Ovary (tissue), 10 donors: ENCODE measurements at regions of chr2 and their contacts with region 1.

Region 1: DNA sequence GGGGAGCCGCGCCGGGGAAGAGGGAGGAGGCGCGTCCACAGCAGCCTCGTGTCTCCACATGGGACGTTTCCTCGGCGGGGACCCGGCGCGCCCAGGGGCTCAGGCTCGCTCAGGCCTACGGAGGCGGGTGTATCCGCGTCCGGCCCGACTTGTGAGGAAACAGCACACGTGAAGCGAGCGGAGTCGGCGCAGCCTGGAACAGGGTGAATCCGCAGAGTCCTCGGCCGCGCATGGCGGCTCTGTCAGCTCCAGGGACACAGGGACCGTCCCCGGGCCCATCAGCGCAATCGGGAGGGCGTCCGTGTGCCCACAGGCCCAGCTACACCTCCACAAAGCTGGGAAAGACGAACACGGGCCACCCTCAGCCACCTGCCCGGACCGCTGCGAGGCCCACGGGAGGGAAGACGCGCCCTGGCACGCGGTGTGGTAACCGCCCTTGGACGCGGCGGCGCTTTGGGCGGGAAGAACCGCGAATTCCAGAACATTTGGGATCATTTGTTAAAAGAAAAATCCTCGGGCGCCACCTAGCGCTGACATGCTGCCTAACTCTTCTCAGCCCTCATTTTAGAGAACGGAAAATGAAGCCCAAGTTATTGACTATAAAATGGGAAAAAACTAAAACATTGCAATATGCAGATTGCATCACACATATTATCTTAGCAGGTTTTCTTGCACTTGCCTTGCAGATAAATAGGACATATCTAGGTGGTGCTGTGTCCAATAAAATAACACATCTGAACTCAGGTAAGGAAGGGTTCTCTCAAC is 40.4 kb downstream of the TMEM18 start:
- DNase-seq: peak; percentile 52 to 86 (median 66)
- H3K4me3 ChIP-seq: no peak overlapping the region
- H3K27ac ChIP-seq: no peak overlapping the region
- H3K4me1 ChIP-seq: peaks cover 2% of the 10 kb centered on the region
- H3K27me3 ChIP-seq: no peaks in the 10 kb centered on the region
- CTCF ChIP-seq: peak in 2 of 3 donors; percentile 32 to 67
- EP300 ChIP-seq: no peak
- POLR2A ChIP-seq: peak; percentile 14

Region 2: DNA sequence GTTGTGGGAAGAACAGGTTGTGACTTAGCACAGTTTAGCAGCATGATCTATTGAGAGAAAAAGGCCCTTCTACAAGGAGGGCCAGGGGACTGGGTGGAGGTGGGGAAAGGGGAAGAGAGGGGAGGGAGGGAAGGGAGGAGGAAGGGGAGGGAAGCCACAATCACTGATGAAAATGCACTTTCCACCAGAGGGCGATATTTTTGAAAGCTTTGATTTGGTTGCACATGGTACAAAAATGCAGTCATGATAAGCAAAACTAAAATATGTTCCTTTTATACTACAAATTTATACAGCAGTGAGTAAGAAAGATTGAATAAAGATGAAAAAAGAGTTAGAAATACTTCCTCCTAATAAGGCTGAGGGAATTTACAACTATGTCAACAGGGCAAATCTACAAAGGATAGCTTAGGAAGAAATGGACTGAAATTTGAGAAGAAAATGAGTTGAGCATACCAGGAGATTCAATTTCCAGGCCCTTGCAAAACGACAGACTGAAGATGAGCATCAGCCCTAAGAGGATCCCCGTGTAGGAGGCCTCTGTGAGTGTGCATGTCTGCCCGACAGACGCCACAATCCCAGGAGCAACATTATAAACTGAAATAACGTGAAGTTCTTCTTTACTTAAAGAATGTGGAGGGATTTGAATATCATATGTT is 390.2 kb before region 1 on chr2:
- intact Hi-C with region 1: loop called in 1 of 4 experiments (anchors 10 kb)
- DNase-seq: no peak
- H3K4me3 ChIP-seq: no peak overlapping the region
- H3K27ac ChIP-seq: no peak overlapping the region
- H3K4me1 ChIP-seq: no peaks in the 10 kb centered on the region
- H3K27me3 ChIP-seq: no peaks in the 10 kb centered on the region
- CTCF ChIP-seq: no peak
- EP300 ChIP-seq: no peak
- POLR2A ChIP-seq: no peak